ENCODE measurements at regions of chr1 and their contacts with region 1.

Region 1: GRCh38 chr1:208245185-208245705 is 1.1 kb upstream of the PLXNA2 start:
- DNase-seq: peak; percentile 91
- ATAC-seq: peak; percentile 83

Region 2: DNA sequence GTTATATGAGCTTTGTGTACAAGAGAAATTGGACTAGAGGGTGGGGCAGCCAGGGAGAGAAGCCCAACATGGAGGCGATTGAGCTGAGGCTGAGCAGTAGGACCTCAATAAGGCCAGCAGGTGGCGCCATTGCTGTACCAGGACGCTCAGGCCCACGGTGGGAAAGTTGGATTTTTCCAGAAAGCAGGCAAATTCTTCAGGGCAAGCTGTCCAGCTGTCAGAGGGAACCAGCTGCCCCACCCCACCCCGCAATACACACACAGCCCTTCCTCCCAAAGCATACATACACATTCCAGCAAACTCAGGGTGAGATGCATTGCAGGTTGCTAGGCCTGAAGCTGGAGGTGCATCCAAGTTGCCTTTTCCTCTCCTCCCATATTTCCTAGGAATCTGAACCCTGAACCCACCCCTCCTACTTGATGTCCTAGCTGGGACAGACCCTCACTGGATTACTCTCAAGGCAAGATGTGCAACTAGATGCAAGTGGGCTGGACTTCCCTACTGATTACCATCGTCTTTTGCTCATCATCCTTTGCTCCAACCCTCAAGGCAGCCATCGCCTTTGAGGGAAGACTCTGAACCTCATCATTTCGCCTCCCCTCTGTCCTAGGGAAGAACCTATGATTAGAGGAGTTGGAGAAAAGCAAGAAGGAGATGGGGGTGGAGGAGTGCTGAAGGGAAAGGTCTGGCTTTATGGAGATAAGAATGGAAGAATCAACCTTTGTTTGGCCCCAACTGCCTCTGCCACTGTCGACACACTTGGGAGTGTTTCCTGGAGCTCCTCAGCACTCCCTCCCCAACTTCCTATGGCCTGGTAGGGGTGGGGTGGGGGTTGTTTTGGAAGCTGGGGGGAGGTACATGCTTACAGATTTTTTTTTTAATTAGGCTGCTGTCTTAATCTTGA is 359.9 kb before region 1 on chr1:
- intact Hi-C with region 1: loop called (anchors 10 kb)
- DNase-seq: peak; percentile 92
- ATAC-seq: peak; percentile 89

Region 3: GRCh38 chr1:207897188-207897587 is 348.1 kb before region 1 on chr1:
- intact Hi-C with region 1: no loop called
- DNase-seq: no peak
- ATAC-seq: no peak

Region 4: DNA sequence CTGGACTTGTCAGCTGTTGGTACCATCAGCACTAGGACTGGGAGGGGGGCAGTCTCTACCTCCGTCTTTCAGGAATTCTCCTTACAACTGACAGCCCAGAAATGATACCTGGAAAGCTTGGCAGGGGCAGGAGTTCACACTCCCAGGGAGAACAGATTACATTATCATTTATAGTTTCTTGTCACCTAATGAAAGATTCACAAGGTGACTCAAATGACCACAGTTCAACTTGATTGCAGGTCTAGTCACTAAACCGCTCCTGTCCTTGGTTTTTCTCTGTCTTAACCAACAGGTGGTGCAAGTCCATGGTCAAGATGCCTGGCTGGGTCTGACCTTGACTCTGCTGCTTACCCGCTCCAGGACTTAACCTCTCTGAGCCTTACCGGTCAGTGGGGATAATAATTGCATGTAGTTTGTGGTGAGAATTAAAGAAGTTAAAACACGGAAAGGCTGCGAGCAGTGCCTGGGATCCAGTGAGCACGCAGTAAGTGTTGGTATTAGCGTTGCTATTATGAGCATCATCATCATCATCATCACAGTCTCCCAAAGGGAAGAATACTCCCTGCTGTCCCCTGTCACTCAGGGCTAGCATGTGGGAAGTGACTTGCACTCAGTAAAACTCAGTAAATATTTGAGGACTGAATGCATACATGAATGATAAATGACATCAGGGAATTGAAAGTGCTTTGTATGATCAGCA is 209.0 kb before region 1 on chr1:
- intact Hi-C with region 1: loop called (anchors 5 kb)
- DNase-seq: no peak
- ATAC-seq: no peak

Region 5: GRCh38 chr1:208120431-208120790 is 124.8 kb before region 1 on chr1:
- intact Hi-C with region 1: no loop called
- DNase-seq: no peak
- ATAC-seq: no peak

Region 6: GRCh38 chr1:208132287-208132883 is 112.9 kb before region 1 on chr1:
- intact Hi-C with region 1: loop called (anchors 1 kb)
- DNase-seq: peak; percentile 90
- ATAC-seq: peak; percentile 89

Region 7: DNA sequence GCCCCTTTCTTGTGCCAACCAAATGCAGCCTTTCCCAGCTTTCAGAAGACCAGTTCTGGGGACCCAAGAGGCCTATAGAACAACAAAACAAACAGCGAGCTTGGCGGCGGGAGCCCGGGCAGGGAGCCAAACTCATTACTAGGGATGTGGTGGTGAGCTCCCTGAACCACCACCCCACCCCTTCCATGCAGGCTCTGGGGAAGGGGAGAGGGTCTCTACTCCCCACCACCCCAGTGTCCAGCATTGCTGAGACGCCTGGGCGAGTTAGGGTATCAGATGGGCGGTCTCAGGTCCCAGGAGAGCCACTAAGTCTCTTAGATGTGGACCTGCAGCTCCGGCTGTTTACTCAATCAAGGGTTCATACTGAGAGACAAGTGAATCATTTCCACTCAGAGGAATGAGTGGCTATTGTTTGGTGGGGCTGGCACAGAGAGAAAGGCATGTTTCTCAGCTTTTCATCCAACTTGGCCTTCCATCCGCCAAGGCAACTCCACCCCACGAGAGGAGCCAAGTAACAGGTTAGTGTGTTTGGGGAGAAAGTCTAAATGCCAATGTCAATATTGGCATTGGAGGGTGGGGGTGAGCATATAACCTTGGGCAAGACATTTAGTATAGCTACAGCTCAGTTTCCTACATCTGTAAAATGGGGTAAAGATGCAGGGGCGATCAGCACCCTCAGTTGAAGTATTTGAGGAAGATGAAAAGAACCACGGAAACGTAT is 42.0 kb before region 1 on chr1:
- intact Hi-C with region 1: loop called (anchors 5 kb)
- DNase-seq: no peak
- ATAC-seq: no peak

Region 8: DNA sequence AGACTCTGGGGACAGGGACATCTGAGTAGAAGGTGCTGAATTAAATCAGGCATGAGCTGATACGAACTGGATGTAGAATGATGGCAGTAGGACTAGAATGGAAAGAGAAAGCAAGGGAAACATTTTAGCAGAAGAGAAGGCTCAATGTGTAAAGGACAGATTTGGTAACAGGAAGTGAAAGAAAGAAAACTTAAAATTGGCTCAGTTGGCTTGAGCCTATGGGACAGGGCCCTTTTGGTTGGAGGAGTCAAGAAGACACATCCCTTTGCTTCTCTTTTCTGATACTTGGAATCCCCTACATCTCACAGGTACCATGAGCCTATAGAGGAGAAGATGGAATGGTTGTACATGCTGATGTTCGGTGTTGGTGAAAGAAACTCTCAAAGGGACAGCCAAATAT is 299.5 kb after region 1 on chr1:
- intact Hi-C with region 1: no loop called
- DNase-seq: no peak
- ATAC-seq: no peak

Measured in Right ventricle myocardium inferior (tissue), 1 donor.